HAP-1 (cell line): ENCODE measurements at regions of chrX and their contacts with region 1.

Region 1: DNA sequence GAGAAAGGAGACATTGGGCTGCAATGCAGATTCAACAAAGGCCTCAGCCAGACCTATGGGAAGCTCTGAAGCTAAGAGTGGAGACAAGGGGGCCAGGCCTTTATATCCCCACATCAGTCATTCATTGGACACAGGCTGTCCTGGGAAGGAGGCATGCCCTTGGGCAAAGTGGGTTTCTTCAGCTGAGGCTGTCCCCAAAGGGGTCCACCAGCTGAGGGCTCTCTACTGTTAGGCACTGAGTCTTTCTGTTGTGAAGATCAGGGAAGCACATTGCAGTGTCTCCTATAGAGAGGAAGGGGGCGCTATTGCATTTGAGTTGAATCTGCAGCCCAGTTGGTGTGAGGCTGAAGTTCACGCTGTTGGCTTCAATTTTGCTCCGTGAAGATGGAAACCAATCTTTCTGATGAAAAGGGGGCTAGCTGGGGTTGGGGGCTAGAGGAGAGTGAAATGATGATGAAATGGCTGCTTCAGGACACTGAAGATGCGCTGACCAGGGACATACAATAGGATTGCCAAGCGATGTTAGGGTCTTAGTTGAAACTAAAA is 48.0 kb downstream of the SLC25A5 start:
- DNase-seq: peak; percentile 63 to 75
- H3K4me3 ChIP-seq: no peak overlapping the region
- H3K4me1 ChIP-seq: no peaks in the 10 kb centered on the region
- H3K27me3 ChIP-seq: peaks cover 3% of the 10 kb centered on the region; the same call in 1 of the 2 replicates

Region 2: DNA sequence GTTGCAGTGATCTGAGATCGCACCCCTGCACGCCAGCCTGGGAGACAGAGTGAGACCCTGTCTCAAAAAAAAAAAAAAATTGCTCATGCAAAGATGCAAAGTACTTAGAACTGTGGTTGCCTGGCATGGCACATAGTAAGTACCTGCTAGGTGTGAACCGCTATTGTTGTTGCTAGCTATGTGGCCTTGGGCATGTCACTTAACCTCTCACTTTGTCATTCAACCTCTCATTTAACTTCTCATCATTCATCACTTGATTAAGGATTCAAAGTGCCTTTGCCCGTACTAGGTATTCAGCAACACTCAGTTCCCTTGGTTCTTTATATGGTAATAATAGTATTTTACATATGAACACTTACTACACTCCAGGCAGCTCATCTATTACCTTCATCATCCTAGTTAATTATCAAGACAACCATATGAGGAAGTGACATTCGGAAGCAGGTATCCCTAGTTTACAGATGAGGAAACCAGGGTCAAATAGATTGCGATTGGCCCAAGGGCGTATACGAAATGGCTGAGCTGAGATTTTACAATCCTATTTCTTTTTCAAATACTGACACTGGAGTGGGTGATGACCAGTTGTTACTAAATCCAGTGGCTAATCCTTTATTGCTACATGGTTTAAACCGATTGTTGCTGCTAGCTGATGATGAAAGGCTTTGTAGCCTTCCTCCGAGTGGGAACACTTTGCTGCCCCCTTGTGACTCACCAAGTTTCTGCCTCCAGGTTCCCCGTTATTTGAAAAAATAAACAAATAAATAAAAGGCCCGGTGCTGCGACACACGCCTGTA is 213.4 kb after region 1 on chrX:
- in situ Hi-C with region 1: loop called (anchors 25 kb)
- DNase-seq: peak; percentile 89 to 90
- H3K4me3 ChIP-seq: no peak overlapping the region
- H3K4me1 ChIP-seq: peaks cover 8% of the 10 kb centered on the region
- H3K27me3 ChIP-seq: peaks cover 4% of the 10 kb centered on the region

Region 3: DNA sequence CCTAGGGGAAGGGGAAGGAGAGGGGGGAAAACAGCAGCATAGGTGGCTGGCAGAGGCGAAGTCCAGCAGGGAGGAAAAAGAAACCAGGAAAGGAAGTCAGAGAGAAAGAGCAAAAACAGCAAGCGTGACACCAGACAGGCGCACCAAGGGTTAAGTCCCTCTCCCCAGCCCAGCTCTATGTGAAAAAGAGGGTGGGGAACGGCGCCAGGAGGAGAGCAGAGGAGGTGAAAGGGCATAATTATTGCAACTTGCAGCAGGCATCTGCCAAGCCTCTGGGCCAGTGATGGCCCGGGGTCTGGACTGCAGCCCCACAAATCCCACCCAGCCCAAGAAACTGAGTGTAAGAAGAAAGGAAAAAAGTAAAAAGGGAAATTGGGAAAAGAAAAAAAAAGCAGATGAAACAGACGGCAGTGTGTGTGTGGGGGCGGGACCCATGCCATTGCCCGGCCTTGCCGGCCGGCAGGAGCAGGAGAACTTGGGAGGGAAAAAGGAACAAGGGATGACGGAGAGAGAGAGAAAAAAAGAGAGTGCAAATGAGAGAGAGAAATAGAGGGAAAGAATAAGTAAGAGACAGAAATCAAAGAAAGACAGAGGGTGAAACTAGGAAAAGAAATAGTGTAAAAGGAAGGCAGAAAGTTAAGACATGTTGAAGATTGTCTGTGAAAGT is 628.1 kb after region 1 on chrX:
- in situ Hi-C with region 1: loop called (anchors 25 kb)
- DNase-seq: peak; percentile 16 to 74
- H3K4me3 ChIP-seq: no peak overlapping the region
- H3K4me1 ChIP-seq: peaks cover 14% of the 10 kb centered on the region
- H3K27me3 ChIP-seq: no peaks in the 10 kb centered on the region

Region 4: DNA sequence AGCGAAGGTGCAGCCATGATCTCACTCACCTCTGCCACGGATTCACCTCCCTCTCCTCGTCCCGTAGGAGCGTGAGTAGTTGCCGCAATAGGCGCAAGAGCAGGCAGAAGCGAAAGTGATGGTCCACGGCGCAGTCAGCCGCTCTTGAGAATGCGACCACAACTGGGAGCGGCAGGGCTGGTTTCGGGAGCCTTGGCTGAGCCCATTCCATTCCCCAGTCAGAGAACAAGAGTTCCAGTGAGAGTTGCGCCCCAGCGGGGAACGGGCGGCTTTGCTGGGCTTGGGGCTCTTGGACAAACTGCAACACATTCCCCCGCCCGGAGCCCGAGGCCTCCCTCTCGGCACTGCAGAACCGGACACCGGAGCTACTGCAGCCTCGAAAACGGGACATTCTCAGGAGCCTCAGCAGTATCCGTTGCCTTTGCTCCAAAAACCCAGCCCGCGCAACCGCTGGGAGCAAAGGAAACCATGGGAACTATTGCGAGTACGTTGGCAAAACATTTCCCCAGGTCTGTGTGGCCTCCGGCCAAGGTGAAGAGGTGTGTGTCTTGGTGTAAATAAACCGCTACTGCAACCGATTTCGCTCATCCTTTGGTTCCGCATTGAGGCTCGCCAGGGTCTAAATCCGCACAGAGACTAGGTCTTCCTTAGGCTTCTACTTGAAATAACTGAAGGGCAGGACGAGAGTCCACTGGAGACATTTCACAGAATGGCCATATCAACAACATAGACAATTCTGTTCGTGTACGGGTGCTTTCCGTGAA is 728.7 kb after region 1 on chrX:
- in situ Hi-C with region 1: loop called (anchors 25 kb)
- DNase-seq: peak; percentile 83 to 89
- H3K4me3 ChIP-seq: peak overlapping the region; percentile 86
- H3K4me1 ChIP-seq: peaks cover 12% of the 10 kb centered on the region
- H3K27me3 ChIP-seq: peaks cover 20% of the 10 kb centered on the region